ENCODE measurements at regions of chr4 and their contacts with region 1.

Region 1: GRCh38 chr4:154506253-154506652 is 14.7 kb upstream of the DCHS2 start:
- DNase-seq: no peak

Region 2: GRCh38 chr4:154329941-154330340 is 176.3 kb before region 1 on chr4:
- intact Hi-C with region 1: loop called (anchors 2 kb)
- DNase-seq: no peak

Region 3: DNA sequence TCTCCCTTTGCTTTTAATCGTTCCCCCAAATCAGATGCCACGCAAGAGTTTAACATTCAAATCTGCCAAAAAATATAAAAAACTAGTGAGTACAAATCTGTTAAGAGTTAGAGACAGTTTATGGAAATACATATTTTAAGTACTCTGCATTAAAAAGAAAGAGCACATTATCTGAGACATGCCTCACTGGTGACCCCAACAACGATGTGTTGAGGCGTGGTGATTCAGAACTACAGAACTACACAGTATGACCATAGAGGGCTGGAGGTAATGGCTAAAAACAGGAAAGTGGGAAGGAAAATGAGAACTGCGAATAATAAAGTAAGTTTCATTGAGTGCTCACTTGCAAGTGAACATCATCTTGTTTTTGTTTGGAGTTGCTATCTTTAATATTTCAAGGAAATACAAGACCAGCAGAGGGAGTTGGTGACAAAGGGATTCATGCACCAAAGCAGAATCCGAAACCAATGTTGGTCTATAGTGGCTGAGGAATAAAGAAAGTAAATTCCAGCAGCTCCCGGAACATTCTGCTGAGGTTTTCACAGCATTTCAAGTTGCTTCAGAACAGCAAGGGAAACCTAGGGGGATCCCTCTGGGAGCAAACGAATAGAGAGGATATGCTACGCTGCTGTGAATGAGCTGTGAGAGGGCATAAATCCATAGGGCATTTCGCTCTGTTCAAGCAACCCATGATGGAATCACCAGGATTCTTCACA is 106.8 kb before region 1 on chr4:
- intact Hi-C with region 1: loop called (anchors 5 kb)
- DNase-seq: no peak

Measured in posterior cingulate gyrus (tissue), 11 donors.